ENCODE measurements at regions of chr7 and their contacts with region 1.

Region 1: GRCh38 chr7:135274495-135275268 is 41.0 kb downstream of the STRA8 start:
- DNase-seq: peak; percentile 73
- CTCF ChIP-seq: peak; percentile 88

Region 2: GRCh38 chr7:135129580-135129979 is 145.1 kb before region 1 on chr7:
- CTCF ChIA-PET with region 1: no interaction called
- POLR2A ChIA-PET with region 1: no interaction called
- DNase-seq: no peak
- CTCF ChIP-seq: no peak

Region 3: GRCh38 chr7:135238112-135238744 is 36.5 kb before region 1 on chr7:
- CTCF ChIA-PET with region 1: interaction called, 10 read pairs
- POLR2A ChIA-PET with region 1: no interaction called
- DNase-seq: no peak
- CTCF ChIP-seq: peak; percentile 18

Region 4: GRCh38 chr7:135260930-135261721 is 13.6 kb before region 1 on chr7:
- CTCF ChIA-PET with region 1: interaction called, 30 read pairs
- POLR2A ChIA-PET with region 1: no interaction called
- DNase-seq: no peak
- CTCF ChIP-seq: no peak

Region 5: DNA sequence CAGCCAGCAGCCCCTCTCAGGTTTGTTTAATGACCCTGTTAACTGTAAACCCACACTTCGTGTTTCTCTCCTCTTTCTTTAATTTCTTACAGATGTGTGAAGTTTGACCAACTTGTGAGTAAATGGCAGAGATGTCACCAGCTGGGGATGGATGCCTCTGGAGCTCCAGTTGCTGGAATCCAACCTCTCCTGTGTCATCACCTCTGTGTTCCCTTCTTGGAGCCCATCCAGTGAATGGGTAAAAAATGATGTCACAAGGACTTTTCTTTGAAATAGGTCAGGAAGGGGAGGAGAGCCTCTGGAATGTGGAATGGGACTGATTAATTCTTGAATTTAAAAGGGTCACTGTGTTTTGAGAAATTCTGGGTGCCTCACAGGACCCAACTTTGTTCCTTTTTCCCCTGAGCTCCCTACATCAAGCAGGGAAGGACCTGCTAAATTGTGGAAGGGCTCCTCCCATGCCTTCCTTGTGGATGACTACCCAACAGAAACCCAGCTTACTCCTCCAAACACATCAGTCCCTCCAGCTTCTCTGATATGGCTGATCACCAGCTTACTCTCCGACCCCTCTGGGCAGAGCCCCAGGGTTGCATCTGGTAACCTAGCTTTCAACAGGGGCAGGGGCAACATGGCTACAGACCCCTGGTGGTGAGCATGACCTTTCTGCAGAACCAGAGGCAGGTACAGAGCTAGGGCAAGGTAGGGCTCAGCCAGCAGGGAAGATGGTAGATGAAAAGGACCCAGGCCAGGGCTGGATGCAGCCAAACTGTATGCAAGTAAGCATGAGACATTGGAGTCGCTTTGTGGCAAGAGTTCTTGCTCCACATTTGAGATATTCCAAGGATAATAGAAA is 26.5 kb after region 1 on chr7:
- CTCF ChIA-PET with region 1: interaction called, 15 read pairs
- POLR2A ChIA-PET with region 1: no interaction called
- DNase-seq: no peak
- CTCF ChIP-seq: no peak

Region 6: GRCh38 chr7:135342887-135343286 is 68.2 kb after region 1 on chr7:
- CTCF ChIA-PET with region 1: interaction called, 73 read pairs
- POLR2A ChIA-PET with region 1: no interaction called
- DNase-seq: no peak
- CTCF ChIP-seq: no peak

Region 7: GRCh38 chr7:135645296-135645904 is 370.7 kb after region 1 on chr7:
- CTCF ChIA-PET with region 1: interaction called, 66 read pairs
- POLR2A ChIA-PET with region 1: no interaction called
- DNase-seq: no peak
- CTCF ChIP-seq: peak; percentile 64

Region 8: GRCh38 chr7:136150311-136150710 is 875.6 kb after region 1 on chr7:
- CTCF ChIA-PET with region 1: no interaction called
- POLR2A ChIA-PET with region 1: no interaction called
- DNase-seq: no peak
- CTCF ChIP-seq: no peak

Measured in GM10248 (cell line).